ENCODE measurements at regions of chr1 and their contacts with region 1.

Region 1: DNA sequence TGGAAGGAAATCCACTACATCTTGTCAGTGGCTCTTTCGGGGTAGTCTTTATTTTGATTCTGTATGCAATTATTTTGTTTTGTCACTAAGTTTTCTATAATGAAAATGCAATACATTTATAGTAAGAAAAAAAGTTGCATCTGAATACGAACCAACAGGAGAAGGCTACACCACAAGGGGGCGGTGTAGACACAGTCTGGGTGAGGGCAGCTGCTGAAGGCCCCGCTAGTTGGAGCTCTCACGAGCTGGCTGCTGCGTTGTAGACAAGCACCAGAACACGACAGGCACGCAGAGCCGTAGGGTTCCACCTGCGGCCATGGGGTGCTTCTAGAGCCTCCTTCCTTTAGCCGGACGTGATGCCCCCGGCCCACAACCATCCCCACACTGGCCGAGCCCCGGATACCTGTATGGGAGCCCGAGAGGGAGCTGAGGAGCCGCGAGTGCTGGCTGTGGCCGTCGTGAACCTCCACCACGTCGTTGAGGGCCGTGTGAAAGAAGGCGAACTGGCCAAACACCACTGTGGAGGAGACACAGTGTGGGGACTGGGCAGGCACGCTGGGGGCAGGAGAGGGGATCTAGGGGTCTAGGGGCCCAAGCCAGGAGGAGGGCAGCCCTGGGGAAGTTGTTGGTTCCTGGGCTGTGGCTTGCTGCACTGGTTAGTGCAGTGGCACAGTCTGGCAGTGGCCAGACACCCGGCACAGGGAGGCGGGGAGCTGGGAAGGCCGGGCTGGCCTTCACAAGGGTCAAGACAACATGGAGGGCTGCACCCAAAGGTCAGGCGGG is 160.8 kb downstream of the ZSCAN20 start:
- DNase-seq: peak; percentile 62
- H3K4me3 ChIP-seq: no peak overlapping the region
- H3K27ac ChIP-seq: no peak overlapping the region
- H3K4me1 ChIP-seq: no peaks in the 10 kb centered on the region
- H3K27me3 ChIP-seq: no peaks in the 10 kb centered on the region
- CTCF ChIP-seq: peak; percentile 97 to 99

Region 2: DNA sequence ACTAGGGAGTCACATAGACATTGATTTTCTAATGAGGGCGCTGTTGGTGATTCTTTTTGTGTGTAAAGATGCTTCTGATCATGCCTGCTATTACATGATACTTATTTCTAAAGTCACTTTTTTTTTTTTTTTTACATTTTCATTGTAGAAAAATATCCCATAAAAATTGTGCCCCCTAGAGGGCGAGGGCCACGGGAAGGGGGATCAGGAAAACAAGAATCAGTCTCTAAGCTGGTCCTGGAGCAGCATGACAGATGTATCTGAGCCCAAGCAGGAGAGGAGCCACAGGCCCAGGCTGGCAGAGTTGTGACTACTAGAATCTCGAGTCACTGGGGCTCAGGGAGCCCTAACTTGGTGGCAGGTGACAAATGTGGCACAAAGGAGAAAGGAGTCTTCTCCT is 132.7 kb before region 1 on chr1:
- CTCF ChIA-PET with region 1: no interaction called
- dilution Hi-C with region 1: no loop called
- in situ Hi-C with region 1: no loop called
- intact Hi-C with region 1: no loop called
- DNase-seq: no peak
- H3K4me3 ChIP-seq: no peak overlapping the region
- H3K27ac ChIP-seq: no peak overlapping the region
- H3K4me1 ChIP-seq: peaks cover 11% of the 10 kb centered on the region
- H3K27me3 ChIP-seq: no peaks in the 10 kb centered on the region
- CTCF ChIP-seq: no peak

Region 3: DNA sequence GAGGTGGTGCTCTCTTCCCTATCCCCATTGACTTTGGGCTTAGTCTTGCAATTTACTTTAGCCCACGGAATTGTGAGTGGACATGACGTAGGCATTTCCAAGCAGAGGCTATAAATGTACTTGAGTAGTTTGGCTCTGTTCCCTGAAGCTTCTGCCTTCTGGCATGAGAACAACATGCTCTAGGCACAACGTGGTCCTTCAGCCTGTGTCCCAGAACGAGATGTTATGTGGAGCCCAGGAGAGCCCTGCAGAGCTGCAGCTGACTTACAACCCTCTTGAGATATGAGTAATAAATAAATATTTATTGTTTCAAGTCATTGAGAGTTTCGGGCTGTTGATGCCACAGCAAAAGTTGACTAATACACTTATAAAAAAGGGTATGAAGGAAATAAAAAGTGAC is 125.5 kb after region 1 on chr1:
- CTCF ChIA-PET with region 1: no interaction called
- dilution Hi-C with region 1: no loop called
- in situ Hi-C with region 1: no loop called
- intact Hi-C with region 1: no loop called
- DNase-seq: no peak
- H3K4me3 ChIP-seq: no peak overlapping the region
- H3K27ac ChIP-seq: no peak overlapping the region
- H3K4me1 ChIP-seq: no peaks in the 10 kb centered on the region
- H3K27me3 ChIP-seq: no peaks in the 10 kb centered on the region
- CTCF ChIP-seq: no peak

Region 4: GRCh38 chr1:33960188-33960895 is 327.1 kb after region 1 on chr1:
- CTCF ChIA-PET with region 1: no interaction called
- dilution Hi-C with region 1: no loop called
- in situ Hi-C with region 1: no loop called
- intact Hi-C with region 1: loop called (anchors 5 kb)
- DNase-seq: no peak
- H3K4me3 ChIP-seq: no peak overlapping the region
- H3K27ac ChIP-seq: no peak overlapping the region
- H3K4me1 ChIP-seq: no peaks in the 10 kb centered on the region
- H3K27me3 ChIP-seq: no peaks in the 10 kb centered on the region
- CTCF ChIP-seq: no peak

Region 5: DNA sequence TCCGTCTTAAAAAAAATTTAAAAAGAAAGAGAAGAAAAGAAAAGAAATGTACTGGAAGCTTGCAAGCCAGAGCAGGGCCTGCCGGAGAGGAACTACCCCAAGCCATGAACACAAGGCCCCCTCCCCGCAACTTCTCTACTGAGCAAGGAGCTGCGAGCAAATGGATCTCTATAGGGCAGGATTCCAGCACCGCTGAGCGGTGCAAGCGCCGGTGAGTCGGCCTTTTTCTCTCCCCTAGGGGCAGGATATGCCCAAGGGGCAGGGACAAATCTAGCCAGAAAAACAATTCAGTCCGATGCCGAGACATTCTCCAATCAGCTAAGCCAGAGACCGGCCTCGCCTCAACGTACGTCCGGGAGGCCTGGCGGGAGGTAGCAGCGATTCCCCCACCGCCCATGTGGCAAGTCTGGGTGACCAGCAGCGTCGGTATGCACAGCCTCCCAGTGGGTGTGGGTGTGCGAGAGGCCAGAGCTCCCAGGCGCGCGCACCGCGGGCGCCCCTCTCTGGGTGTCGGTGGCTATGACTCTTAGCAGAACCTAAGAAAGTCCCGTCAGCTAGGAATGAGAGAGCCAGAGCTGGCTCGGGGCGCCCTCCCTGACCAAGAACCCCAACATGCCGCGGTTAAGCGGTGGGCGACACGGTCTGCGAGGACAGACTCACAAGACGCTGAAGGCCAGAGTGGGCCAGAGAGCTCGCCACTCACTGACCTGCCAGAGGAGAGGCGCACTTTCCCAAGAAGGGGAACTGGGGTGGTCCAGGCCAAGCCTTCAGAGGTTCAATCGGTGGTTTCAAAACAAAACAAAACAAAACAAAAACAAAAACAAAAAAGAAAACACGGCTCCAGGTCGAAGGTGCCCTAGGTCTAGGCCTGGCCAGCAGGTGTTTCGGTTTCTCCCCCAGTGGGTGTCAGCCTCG is 529.9 kb after region 1 on chr1:
- CTCF ChIA-PET with region 1: no interaction called
- dilution Hi-C with region 1: no loop called
- in situ Hi-C with region 1: no loop called
- intact Hi-C with region 1: loop called (anchors 2 kb)
- DNase-seq: peak; percentile 15
- H3K4me3 ChIP-seq: peak overlapping the region in 1 of 3 experiments; percentile 20
- H3K27ac ChIP-seq: no peak overlapping the region
- H3K4me1 ChIP-seq: peaks cover 4% of the 10 kb centered on the region
- H3K27me3 ChIP-seq: peaks cover 16% of the 10 kb centered on the region
- CTCF ChIP-seq: peak; percentile 11 to 53

Region 6: GRCh38 chr1:34597877-34598514 is 964.8 kb after region 1 on chr1:
- CTCF ChIA-PET with region 1: no interaction called
- dilution Hi-C with region 1: no loop called
- in situ Hi-C with region 1: loop called (anchors 10 to 25 kb)
- intact Hi-C with region 1: loop called (anchors 1 kb)
- DNase-seq: peak; percentile 42
- H3K4me3 ChIP-seq: no peak overlapping the region
- H3K27ac ChIP-seq: no peak overlapping the region
- H3K4me1 ChIP-seq: no peaks in the 10 kb centered on the region
- H3K27me3 ChIP-seq: no peaks in the 10 kb centered on the region
- CTCF ChIP-seq: peak; percentile 91 to 95

Region 7: GRCh38 chr1:34681480-34682451 is 1048.6 kb after region 1 on chr1:
- CTCF ChIA-PET with region 1: no interaction called
- dilution Hi-C with region 1: no loop called
- in situ Hi-C with region 1: no loop called
- intact Hi-C with region 1: loop called (anchors 2 kb)
- DNase-seq: peak; percentile 39
- H3K4me3 ChIP-seq: no peak overlapping the region
- H3K27ac ChIP-seq: no peak overlapping the region
- H3K4me1 ChIP-seq: no peaks in the 10 kb centered on the region
- H3K27me3 ChIP-seq: no peaks in the 10 kb centered on the region
- CTCF ChIP-seq: peak; percentile 91 to 94

Measured in mammary epithelial cell (primary cell).